HAP-1 (cell line): ENCODE measurements at regions of chr3 and their contacts with region 1.

Region 1: GRCh38 chr3:170689893-170690660 is 104.2 kb upstream of the SLC7A14 start:
- DNase-seq: peak; percentile 65 to 89
- H3K4me3 ChIP-seq: no peak overlapping the region
- H3K4me1 ChIP-seq: peaks cover 26% of the 10 kb centered on the region
- H3K27me3 ChIP-seq: no peaks in the 10 kb centered on the region

Region 2: GRCh38 chr3:170414202-170414663 is 275.8 kb before region 1 on chr3:
- in situ Hi-C with region 1: loop called (anchors 25 kb)
- DNase-seq: peak; percentile 71 to 85
- H3K4me3 ChIP-seq: no peak overlapping the region
- H3K4me1 ChIP-seq: peaks cover 6% of the 10 kb centered on the region
- H3K27me3 ChIP-seq: no peaks in the 10 kb centered on the region

Region 3: DNA sequence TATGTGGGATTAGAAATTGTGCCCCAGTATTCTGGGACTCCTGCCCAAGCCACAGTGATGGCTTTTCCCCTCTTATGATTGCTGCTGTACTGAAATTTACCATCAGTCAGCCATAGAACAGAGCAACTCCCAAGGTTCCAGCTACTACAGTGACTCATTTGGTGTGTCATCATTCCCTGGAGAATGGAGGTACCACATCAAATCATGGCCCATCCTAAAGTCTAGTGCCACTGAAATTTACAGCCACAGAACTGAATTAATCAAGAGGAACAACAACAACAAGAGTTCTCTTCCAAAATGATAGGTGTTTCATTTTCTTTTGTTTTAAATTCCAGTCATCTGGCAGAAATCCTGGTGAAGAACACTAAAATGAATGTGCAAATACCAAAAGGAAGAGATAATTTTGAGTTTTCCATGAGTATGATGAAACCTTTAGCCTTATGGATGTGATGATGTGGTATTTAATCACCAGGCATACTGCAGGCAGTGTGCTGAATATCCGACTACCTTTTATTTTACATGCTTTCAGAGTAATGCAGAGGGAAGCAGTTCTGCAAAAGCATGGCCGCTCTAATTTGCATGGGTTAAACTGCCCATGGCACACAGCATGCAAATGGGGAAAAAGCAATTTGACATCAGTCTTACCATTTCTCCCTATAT is 412.0 kb after region 1 on chr3:
- in situ Hi-C with region 1: no loop called
- DNase-seq: no peak
- H3K4me3 ChIP-seq: no peak overlapping the region
- H3K4me1 ChIP-seq: no peaks in the 10 kb centered on the region
- H3K27me3 ChIP-seq: no peaks in the 10 kb centered on the region